Activated T-helper 1 cell treated with anti-CD3 and anti-CD28 coated beads, Interleukin-12 subunit alpha, Interleukin-12 subunit beta, Interleukin-2, Interleukin-4 antibody, amounts not matched to agents 30 ng/mL and 10 ng/mL and 1 ng/mL, durations not matched to agents 14 hours and 24 hours and 36 hours (primary cell): ENCODE measurements at regions of chr7 and their contacts with region 1.

Region 1: GRCh38 chr7:148503875-148504487 is 86.6 kb upstream of the C7orf33 start:
- DNase-seq: no peak
- H3K4me3 Mint-ChIP-seq: no peak overlapping the region
- H3K27ac Mint-ChIP-seq: no peak overlapping the region
- H3K4me1 Mint-ChIP-seq: peaks cover 7% of the 10 kb centered on the region
- H3K27me3 Mint-ChIP-seq: peaks cover 17% of the 10 kb centered on the region

Region 2: DNA sequence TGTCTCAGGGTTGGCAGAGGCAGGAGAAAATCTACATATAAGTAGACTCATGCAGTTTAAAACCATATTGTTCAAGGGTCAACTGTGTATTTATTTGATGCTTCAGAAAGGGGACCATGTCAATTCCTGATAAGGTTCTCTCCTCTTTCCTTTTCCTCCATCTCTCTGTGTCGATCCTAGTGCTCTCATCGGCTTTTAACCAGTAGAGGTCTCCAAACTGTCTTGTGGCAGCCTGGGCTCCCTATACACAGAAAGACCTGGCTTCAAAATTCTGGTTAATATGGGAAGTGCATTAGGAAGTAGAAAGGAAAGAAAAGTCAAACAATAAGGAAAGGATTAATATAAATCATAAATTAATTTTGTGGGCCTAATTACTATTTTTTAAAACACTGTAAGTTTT is 217.8 kb before region 1 on chr7:
- intact Hi-C with region 1: no loop called
- DNase-seq: no peak
- H3K4me3 Mint-ChIP-seq: no peak overlapping the region
- H3K27ac Mint-ChIP-seq: no peak overlapping the region
- H3K4me1 Mint-ChIP-seq: no peaks in the 10 kb centered on the region
- H3K27me3 Mint-ChIP-seq: peaks cover 3% of the 10 kb centered on the region

Region 3: GRCh38 chr7:148527707-148528168 is 23.8 kb after region 1 on chr7:
- intact Hi-C with region 1: loop called (anchors 1 kb)
- DNase-seq: peak; percentile 78
- H3K4me3 Mint-ChIP-seq: no peak overlapping the region
- H3K27ac Mint-ChIP-seq: peak overlapping the region; percentile 22
- H3K4me1 Mint-ChIP-seq: peaks cover 12% of the 10 kb centered on the region
- H3K27me3 Mint-ChIP-seq: peaks cover 20% of the 10 kb centered on the region

Region 4: DNA sequence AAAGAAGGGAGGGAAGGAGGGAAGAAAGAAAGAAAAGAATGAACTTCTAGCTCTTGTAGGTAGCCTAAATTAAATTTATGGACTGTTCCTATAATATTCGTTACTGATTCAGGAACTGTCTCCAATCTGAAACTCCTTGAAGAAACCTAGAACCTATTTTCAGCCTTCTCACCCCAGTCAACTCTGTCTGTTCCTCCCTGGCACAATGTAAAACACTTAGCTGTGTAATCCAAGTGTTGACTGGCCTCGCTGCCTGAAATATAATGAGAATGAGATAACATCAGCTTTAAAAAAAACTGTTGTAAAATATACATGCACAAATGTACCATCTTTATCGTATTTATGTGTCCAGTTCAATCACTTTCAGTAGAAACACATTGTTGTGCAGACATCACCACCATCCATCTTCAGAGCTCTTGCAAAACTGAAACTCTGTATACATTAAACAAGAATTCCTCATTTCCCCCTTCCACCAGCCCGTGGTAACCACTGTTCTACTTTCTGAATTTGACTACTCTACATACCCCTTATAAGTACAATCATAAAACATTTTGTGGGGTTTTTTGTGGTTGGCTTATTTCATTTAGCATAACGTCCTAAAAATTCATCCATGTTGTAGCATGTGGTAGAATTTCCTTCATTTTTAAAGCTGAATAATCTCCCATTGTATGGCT is 80.3 kb after region 1 on chr7:
- intact Hi-C with region 1: loop called (anchors 2 kb)
- DNase-seq: no peak
- H3K4me3 Mint-ChIP-seq: no peak overlapping the region
- H3K27ac Mint-ChIP-seq: no peak overlapping the region
- H3K4me1 Mint-ChIP-seq: peaks cover 24% of the 10 kb centered on the region
- H3K27me3 Mint-ChIP-seq: peaks cover 8% of the 10 kb centered on the region

Region 5: DNA sequence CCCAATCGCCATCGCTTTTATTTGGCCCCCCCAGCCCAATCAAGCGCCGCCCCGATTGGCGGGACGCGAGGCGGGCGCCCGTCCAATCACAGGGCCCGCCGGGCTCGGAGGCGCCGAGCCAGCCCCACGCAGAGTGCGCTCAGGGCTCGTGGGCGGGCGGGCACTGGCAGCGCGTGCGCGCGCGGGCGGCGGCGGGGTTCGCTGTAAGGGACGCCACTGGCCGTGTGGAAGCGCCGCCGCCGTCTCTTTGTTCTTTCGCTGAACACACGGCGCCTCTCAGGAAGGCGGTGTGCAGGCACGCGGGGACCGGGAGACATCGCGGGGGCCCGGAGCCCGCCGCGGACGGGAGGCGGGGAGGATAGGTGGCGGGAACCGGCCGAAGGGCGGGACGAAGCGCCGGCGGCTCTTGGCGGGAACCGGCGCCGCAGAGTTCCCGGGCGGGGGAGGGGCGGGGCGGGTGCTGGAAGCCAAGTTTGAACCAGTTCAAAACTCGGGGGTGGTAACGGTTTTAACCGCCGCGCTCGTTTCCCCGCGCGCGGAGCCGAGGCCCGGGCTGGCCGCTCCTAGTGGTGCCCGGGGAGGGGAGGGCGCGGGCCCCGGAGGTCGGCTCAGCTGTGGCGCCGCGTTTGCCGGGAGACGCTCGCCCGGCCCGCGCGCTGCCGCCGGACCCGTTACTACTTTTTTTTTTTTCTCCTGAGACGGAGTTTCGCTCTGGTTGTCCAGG is 380.5 kb after region 1 on chr7:
- intact Hi-C with region 1: loop called (anchors 5 kb)
- DNase-seq: peak; percentile 95
- H3K4me3 Mint-ChIP-seq: peak overlapping the region; percentile 93
- H3K27ac Mint-ChIP-seq: peak overlapping the region; percentile 98
- H3K4me1 Mint-ChIP-seq: peaks cover 43% of the 10 kb centered on the region
- H3K27me3 Mint-ChIP-seq: no peaks in the 10 kb centered on the region

Region 6: GRCh38 chr7:149067876-149068275 is 563.9 kb after region 1 on chr7:
- intact Hi-C with region 1: loop called (anchors 10 kb)
- DNase-seq: no peak
- H3K4me3 Mint-ChIP-seq: peak overlapping the region; percentile 12
- H3K27ac Mint-ChIP-seq: no peak overlapping the region
- H3K4me1 Mint-ChIP-seq: peaks cover 8% of the 10 kb centered on the region
- H3K27me3 Mint-ChIP-seq: no peaks in the 10 kb centered on the region